Cardiac septum (tissue), 1 donor: ENCODE measurements at regions of chr9 and their contacts with region 1.

Region 1: GRCh38 chr9:17810728-17811571 is 232.1 kb downstream of the SH3GL2 start:
- DNase-seq: no peak

Region 2: GRCh38 chr9:18002718-18003660 is 192.0 kb after region 1 on chr9:
- intact Hi-C with region 1: no loop called
- DNase-seq: no peak

Region 3: DNA sequence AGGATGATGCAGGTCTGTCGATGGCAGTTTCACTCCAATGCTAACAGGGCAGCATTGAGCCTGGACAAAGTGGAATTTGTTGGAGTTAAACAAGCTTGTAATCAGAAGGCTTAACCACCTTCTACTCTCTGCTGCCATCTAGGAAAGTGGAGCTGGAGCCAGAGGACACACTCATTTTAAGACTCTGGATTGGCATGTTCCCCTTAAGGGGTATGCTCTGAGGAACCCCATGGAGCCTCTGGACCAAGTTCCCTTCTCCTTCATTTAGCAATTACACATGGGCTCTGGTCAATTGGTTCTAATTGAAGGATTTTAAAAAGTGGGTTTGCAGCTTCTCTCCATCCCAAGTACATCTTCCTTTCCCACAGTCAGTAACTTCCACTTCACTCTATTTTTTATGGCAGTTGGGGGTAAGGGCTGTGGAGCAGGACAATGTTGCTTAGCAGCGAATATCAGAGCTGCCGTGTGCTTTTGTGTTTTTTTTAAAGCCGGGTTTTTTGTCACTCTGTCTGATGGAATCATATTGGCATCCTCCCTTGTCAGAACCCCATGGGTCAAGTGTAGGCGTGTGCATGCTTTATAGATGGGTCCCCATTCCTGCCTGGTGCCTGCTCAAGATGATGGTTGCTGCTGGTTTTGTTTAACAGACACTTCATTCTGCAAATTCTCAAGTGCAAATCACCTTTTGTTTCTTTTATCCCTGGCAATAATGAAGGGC is 332.2 kb after region 1 on chr9:
- intact Hi-C with region 1: loop called (anchors 5 kb)
- DNase-seq: no peak

Region 4: GRCh38 chr9:19028835-19029451 is 1218.0 kb after region 1 on chr9:
- intact Hi-C with region 1: loop called (anchors 10 kb)
- DNase-seq: no peak